ENCODE measurements at regions of chr18 and their contacts with region 1.

Region 1: GRCh38 chr18:6219116-6219717 is 195.5 kb downstream of the L3MBTL4 start:
- DNase-seq: peak; percentile 77
- ATAC-seq: peak; percentile 99
- H3K4me3 Mint-ChIP-seq: no peak overlapping the region
- H3K27ac Mint-ChIP-seq: no peak overlapping the region
- H3K4me1 Mint-ChIP-seq: no peaks in the 10 kb centered on the region
- H3K27me3 Mint-ChIP-seq: no peaks in the 10 kb centered on the region
- CTCF ChIP-seq: peak; percentile 73

Region 2: GRCh38 chr18:5879479-5879882 is 339.7 kb before region 1 on chr18:
- CTCF ChIA-PET with region 1: interaction called, 11 read pairs
- POLR2A ChIA-PET with region 1: no interaction called
- DNase-seq: no peak
- ATAC-seq: no peak
- H3K4me3 Mint-ChIP-seq: no peak overlapping the region
- H3K27ac Mint-ChIP-seq: no peak overlapping the region
- H3K4me1 Mint-ChIP-seq: no peaks in the 10 kb centered on the region
- H3K27me3 Mint-ChIP-seq: no peaks in the 10 kb centered on the region
- CTCF ChIP-seq: peak; percentile 64

Region 3: DNA sequence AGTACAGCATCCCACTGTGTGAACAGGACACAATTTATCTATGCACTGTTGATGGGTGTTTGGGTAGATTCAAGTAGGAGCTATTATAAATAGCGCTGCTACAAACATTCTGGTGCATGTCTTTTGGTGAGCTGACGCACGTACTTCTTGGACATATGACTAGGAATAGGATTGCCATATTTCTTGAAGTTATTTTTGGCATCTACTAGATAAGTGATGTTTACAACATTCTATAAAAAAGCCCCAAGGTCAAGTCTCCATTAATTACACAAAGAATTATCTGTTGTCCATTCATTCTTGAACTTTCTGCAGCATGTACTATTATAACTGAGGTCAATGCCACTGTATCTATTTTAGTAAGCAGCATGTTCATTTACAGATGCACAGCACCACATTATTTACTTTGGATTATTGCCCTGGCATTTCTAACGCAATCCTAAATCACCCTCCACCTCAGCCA is 98.4 kb before region 1 on chr18:
- CTCF ChIA-PET with region 1: no interaction called
- POLR2A ChIA-PET with region 1: no interaction called
- DNase-seq: no peak
- ATAC-seq: no peak
- H3K4me3 Mint-ChIP-seq: no peak overlapping the region
- H3K27ac Mint-ChIP-seq: no peak overlapping the region
- H3K4me1 Mint-ChIP-seq: peaks cover 10% of the 10 kb centered on the region
- H3K27me3 Mint-ChIP-seq: no peaks in the 10 kb centered on the region
- CTCF ChIP-seq: no peak

Region 4: DNA sequence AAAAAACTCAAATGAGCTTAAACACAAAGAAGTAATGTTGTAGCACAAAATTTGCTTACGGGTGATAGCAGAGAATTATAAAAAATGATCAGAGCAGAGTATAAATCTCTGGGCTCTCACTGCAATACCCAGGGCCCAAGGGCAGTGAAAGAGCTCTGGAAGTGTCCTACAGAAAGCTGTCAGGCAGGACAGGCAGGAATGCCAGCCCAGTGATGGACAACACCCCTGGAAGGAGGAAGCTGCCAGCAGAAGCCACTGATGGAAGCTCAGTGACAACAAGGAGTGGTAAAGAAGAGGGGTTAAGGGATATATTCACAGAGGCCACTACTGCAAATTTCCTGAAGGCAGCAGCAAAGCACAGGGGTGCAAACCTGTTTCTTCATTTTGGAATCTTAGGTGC is 19.4 kb before region 1 on chr18:
- CTCF ChIA-PET with region 1: interaction called, 10 read pairs
- POLR2A ChIA-PET with region 1: no interaction called
- DNase-seq: no peak
- ATAC-seq: no peak
- H3K4me3 Mint-ChIP-seq: no peak overlapping the region
- H3K27ac Mint-ChIP-seq: no peak overlapping the region
- H3K4me1 Mint-ChIP-seq: no peaks in the 10 kb centered on the region
- H3K27me3 Mint-ChIP-seq: no peaks in the 10 kb centered on the region
- CTCF ChIP-seq: no peak

Region 5: DNA sequence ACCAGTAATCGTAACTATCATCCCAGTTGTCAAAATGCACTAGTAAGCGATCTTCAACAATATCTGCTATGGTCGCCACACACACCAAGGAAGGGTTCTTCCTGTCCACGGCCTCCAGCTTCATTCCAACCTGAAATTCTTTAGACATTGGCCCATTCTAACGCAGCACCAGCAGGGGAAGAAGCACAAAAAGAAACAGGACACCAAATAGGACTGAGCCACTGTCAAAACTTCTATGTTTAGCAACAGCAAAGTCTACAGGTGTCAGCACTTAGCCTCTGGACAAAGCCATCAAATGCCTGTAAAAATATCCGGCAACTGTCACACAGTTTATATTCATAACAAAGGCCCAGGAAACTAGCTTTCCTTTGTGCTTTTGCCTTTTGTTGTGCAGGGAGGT is 20.5 kb after region 1 on chr18:
- CTCF ChIA-PET with region 1: interaction called, 13 read pairs
- POLR2A ChIA-PET with region 1: no interaction called
- DNase-seq: no peak
- ATAC-seq: peak; percentile 59
- H3K4me3 Mint-ChIP-seq: no peak overlapping the region
- H3K27ac Mint-ChIP-seq: no peak overlapping the region
- H3K4me1 Mint-ChIP-seq: peaks cover 16% of the 10 kb centered on the region
- H3K27me3 Mint-ChIP-seq: no peaks in the 10 kb centered on the region
- CTCF ChIP-seq: no peak

Measured in WTC11 (cell line).